AG04450 (cell line): ENCODE measurements at regions of chr18 and their contacts with region 1.

Region 1: DNA sequence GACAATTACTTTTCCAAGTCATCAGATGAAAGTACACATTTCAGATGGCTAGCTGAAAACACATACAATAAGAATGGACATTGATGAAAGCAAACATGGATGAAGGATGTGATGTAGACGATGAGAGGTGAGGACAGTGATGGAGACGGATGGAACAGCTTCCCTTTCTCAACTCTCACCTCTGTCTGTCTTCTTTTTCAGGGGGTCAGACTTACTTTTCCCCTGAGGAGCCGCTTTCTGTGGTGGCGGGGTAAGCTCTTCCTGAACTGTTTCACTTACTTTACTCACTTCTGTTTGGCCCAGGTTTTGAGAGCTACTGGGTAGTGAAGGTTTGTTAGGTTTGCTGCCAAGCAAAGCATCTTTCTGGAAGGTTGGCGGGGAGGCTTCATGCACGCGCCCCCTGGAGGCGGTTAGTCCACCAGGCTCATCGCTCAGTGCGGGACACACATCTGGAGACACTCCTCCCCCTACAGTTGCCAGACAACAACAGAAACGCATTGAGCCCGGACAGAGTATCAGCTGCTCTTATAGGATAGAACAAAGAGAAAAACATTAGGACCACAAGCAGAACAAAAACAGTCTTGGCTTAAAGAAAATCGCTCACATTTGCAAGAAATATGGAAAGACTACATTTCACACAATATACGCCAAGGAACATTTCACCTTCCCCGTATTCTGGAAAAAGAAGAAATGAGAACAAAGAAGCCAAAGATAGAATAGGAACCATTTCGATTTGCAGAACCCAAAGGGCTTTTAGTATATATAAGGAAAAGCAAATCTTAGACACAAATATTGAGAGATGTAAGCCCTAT is 90.5 kb downstream of the MYOM1 start:
- DNase-seq: peak; percentile 63
- H3K4me3 ChIP-seq: no peak overlapping the region
- H3K27ac ChIP-seq: no peak overlapping the region
- H3K27me3 ChIP-seq: peaks cover 5% of the 10 kb centered on the region
- CTCF ChIP-seq: peak; percentile 93

Region 2: DNA sequence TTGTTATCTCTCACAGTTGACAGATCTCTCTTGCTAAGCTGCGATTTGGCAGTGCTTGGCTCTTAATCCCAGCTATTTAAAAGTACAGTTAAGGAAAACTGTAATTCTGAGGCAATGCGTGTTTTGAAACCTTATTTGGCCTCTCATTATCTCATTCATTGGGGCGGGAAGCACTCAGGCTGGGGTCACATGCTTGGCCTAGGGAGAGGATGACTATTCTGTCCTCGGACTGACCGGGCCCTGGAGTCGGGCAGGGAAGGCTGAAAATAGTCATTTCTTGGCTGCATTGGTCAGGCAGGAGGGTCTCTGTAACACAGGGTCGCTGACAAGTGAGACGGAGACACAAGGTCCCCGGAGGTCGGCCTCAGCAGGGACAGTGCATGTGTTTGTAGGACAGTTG is 302.7 kb before region 1 on chr18:
- CTCF ChIA-PET with region 1: no interaction called
- POLR2A ChIA-PET with region 1: no interaction called
- DNase-seq: no peak
- H3K4me3 ChIP-seq: no peak overlapping the region
- H3K27ac ChIP-seq: no peak overlapping the region
- H3K27me3 ChIP-seq: peaks cover 3% of the 10 kb centered on the region
- CTCF ChIP-seq: no peak

Region 3: DNA sequence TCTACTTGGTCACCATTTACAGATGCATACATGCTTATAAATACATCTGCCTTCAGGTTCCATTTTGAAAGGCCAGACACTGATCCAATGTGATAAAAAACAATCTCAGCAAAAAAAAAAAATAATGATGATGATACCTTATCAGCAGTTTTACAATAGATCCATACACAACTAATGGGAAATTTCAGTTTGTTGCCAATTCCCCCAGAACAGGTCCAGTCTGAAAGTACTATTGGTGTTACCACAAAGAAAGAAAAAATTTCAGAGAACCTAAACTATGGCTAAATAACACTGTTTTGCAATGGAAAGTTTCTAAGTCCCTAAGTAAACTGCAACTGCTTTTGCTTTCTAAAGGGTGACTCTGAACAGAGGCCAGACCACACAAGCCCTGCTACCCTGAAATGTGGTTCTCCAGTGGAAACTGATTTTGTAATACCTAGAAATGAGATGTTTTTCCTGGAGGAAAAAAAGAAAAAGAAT is 170.4 kb before region 1 on chr18:
- CTCF ChIA-PET with region 1: interaction called, 11 read pairs
- POLR2A ChIA-PET with region 1: no interaction called
- DNase-seq: no peak
- H3K4me3 ChIP-seq: no peak overlapping the region
- H3K27ac ChIP-seq: no peak overlapping the region
- H3K27me3 ChIP-seq: no peaks in the 10 kb centered on the region
- CTCF ChIP-seq: no peak

Region 4: DNA sequence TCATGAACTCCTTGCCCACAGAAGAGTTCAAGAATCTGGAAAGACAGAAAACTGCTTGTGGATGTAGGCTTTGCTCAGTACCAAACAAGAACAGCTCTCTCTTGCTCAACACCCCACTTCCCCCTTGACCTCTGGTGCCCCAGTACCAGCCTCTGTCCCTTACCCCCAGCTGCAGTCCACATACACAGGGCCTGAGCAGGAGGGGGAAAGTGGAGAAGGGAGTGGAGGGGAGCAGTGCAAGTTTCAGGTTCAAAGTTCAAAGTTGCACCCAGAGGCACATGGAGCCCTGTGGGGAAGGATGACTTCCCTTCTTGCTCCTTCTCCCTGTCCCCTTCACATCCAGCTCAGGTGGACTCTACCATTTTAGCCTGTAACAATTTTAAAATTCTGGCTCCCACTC is 55.2 kb before region 1 on chr18:
- CTCF ChIA-PET with region 1: interaction called, 12 read pairs
- POLR2A ChIA-PET with region 1: no interaction called
- DNase-seq: no peak
- H3K4me3 ChIP-seq: no peak overlapping the region
- H3K27ac ChIP-seq: no peak overlapping the region
- H3K27me3 ChIP-seq: no peaks in the 10 kb centered on the region
- CTCF ChIP-seq: no peak

Region 5: GRCh38 chr18:3104190-3105054 is 24.8 kb before region 1 on chr18:
- CTCF ChIA-PET with region 1: interaction called, 18 read pairs
- POLR2A ChIA-PET with region 1: no interaction called
- DNase-seq: peak; percentile 6
- H3K4me3 ChIP-seq: no peak overlapping the region
- H3K27ac ChIP-seq: no peak overlapping the region
- H3K27me3 ChIP-seq: no peaks in the 10 kb centered on the region
- CTCF ChIP-seq: no peak

Region 6: DNA sequence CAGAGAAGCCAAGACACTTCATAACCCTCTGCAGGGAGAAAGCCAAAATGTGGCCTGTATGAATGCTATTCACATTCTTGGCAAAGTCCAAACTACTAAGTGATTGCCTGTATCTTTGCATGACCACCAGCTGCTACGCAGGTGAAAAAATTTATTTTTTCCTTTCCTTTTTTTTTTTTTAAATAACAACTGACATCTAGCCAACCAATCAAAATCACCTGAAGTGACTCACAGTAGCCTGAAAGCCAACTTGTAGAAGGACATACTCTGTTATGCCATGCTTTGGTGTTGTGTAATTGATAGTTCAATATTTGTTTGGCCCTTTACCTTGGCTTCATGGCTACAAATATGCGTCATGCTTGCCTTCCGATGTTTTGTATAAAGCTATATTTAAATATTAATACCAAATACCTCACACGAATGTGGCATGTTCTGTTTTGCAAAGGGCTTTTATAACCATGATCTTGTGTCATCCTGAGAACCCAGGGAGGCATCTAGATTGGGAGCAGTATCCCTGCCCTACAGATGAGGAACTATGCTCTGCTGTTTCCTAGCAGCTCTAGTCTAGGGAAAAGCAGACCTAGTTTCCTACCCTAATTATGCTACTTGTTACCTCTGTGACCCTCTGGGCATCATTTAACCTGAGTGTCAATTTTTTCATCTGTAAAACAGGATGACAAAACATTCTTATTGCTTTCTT is 11.6 kb before region 1 on chr18:
- CTCF ChIA-PET with region 1: interaction called, 29 read pairs
- POLR2A ChIA-PET with region 1: no interaction called
- DNase-seq: no peak
- H3K4me3 ChIP-seq: no peak overlapping the region
- H3K27ac ChIP-seq: no peak overlapping the region
- H3K27me3 ChIP-seq: peaks cover 24% of the 10 kb centered on the region
- CTCF ChIP-seq: no peak

Region 7: DNA sequence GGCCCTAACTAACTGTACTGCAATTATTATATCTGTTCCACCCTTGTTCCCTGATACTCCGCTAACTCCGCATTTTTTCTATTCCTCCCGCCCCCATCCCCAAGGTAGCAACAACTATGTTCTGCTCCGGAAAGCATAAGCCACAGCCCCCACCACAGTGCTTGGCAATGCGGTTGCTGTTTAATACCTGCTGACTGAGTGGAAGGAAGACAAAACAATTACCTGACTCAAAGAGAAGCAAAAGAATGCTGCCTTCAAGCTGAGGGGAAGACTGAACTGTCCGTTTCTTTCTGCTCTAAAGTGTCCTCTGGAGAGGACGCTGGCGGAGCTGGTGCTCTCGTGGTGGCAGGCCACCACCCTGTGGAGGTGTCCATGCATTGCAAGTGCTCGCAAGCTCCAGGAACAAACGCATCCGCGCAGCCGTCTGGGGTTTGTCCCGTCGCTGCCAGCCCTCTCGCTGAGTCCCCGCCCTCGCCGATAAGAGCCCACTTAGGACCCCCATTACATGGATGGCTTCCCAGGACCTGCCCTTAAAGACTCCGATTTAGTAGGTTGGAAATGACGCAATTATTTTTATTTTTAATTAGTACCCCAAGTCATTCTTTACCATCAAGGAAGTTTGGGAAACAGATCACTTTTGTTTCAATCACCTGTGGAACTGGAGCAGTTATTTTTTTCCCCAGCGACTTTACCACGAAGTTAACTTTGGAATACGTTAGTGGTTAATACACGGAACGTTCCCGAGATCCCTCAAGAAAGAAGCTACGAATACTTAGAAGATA is 116.8 kb after region 1 on chr18:
- CTCF ChIA-PET with region 1: interaction called, 10 read pairs
- POLR2A ChIA-PET with region 1: no interaction called
- DNase-seq: no peak
- H3K4me3 ChIP-seq: peak overlapping the region; percentile 38
- H3K27ac ChIP-seq: no peak overlapping the region
- H3K27me3 ChIP-seq: no peaks in the 10 kb centered on the region
- CTCF ChIP-seq: peak; percentile 91

Region 8: GRCh38 chr18:3402982-3403451 is 273.8 kb after region 1 on chr18:
- CTCF ChIA-PET with region 1: no interaction called
- POLR2A ChIA-PET with region 1: no interaction called
- DNase-seq: no peak
- H3K4me3 ChIP-seq: no peak overlapping the region
- H3K27ac ChIP-seq: no peak overlapping the region
- H3K27me3 ChIP-seq: no peaks in the 10 kb centered on the region
- CTCF ChIP-seq: no peak